ENCODE measurements at regions of chr11 and their contacts with region 1.

Region 1: GRCh38 chr11:22130462-22131053 is 62.3 kb upstream of the ANO5 start:
- DNase-seq: no peak
- ATAC-seq: no peak; the same call in 2 of the 3 replicates
- H3K4me3 ChIP-seq: no peak overlapping the region
- H3K27ac ChIP-seq: no peak overlapping the region
- H3K4me1 ChIP-seq: no peaks in the 10 kb centered on the region
- H3K27me3 ChIP-seq: no peaks in the 10 kb centered on the region
- CTCF ChIP-seq: peak; percentile 35; the same call in 1 of the 2 replicates
- EP300 ChIP-seq: no peak
- POLR2A ChIP-seq: no peak
- RAD21 ChIP-seq: no peak

Region 2: DNA sequence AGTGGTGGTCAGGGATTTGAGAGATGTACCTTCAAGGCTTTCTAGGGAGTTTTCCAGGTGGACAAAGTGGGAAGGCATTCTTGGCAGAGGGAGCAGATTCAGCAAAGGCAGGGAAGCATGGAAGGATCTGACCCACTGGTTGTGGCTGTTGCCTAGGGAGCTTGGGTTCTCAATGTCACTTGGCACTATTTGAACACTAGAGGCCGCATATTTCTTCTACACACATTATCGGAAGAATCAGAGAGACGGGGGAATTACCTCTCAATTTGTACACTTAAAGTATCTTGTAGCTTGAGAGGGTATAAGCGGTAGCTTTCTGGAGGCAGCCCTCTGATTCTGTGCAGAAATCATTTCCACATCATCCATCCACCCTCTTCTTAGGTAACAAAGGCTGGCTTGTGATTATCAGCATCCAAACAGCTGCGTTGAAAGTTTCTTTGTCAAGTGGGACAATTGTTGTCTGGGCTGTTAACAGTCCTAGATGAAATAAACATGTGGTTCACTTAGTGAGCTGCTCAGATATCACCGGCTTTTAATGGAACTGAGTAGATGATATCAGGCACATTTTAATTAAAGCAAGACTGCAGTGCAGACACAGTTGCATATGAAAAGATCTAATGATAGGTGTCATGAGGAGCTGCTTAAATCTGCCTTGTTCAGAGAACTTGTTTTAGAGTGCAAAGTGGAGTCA is 1458.6 kb before region 1 on chr11:
- CTCF ChIA-PET with region 1: no interaction called
- POLR2A ChIA-PET with region 1: no interaction called
- in situ Hi-C with region 1: loop called (anchors 25 kb)
- intact Hi-C with region 1: no loop called
- DNase-seq: peak; percentile 7
- ATAC-seq: peak; percentile 84
- H3K4me3 ChIP-seq: no peak overlapping the region
- H3K27ac ChIP-seq: no peak overlapping the region
- H3K4me1 ChIP-seq: no peaks in the 10 kb centered on the region
- H3K27me3 ChIP-seq: peaks cover 3 to 52% of the 10 kb centered on the region in 2 experiments
- CTCF ChIP-seq: peak; percentile 17; the same call in 1 of the 2 replicates
- EP300 ChIP-seq: no peak
- POLR2A ChIP-seq: no peak
- RAD21 ChIP-seq: no peak

Region 3: DNA sequence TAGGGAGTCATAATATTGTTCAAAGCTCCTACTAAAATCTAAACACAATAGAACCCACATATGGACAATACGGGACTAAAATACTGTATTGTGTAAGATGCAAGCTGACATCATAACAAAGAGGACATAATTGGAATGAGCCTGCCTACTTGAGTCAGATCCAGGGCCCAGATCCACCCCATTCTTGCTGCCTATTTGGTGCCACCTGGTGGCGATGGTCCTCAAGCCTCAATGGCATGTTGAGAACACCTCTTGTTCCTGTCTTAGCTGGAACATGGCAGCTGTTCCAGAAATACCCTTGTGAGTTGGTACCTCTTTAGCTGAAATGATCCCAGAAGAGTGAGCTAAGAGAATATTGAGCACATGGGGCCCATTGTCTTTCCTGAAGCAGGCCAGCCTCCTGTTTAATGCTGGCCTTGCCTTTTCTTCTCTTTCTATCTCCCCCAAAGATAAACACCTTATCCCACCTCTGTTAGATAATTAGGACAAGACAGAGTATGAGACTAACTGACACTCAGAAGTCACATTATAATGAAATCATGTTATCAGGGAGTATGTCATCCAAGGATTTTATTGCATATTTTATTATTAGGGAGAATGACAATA is 618.6 kb before region 1 on chr11:
- CTCF ChIA-PET with region 1: no interaction called
- POLR2A ChIA-PET with region 1: no interaction called
- in situ Hi-C with region 1: no loop called
- intact Hi-C with region 1: loop called (anchors 5 kb)
- DNase-seq: peak; percentile 48
- ATAC-seq: peak; percentile 88
- H3K4me3 ChIP-seq: no peak overlapping the region
- H3K27ac ChIP-seq: no peak overlapping the region
- H3K4me1 ChIP-seq: no peaks in the 10 kb centered on the region
- H3K27me3 ChIP-seq: no peaks in the 10 kb centered on the region
- CTCF ChIP-seq: peak; percentile 75
- EP300 ChIP-seq: no peak
- POLR2A ChIP-seq: no peak
- RAD21 ChIP-seq: no peak

Region 4: DNA sequence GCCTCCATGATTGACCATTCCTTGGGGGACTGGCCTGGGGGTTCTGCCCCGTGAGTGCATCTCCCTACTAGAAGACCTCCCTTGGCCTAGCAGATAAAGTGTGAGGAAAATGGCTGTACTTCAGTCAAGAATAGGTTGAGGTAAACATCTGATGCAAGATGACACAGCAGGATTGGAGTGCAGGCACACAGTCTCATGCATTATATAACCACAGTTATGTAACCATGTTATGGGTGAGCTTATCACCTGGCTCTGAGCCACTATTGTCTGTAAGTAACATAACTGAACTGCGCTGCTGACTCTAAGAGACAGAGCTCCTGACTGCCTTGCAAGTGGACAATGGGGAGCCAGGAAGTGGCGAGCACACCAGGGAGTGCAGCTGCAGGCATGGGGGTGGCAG is 316.4 kb before region 1 on chr11:
- CTCF ChIA-PET with region 1: no interaction called
- POLR2A ChIA-PET with region 1: no interaction called
- in situ Hi-C with region 1: no loop called
- intact Hi-C with region 1: loop called (anchors 1 kb)
- DNase-seq: peak; percentile 40
- ATAC-seq: no peak
- H3K4me3 ChIP-seq: no peak overlapping the region
- H3K27ac ChIP-seq: no peak overlapping the region
- H3K4me1 ChIP-seq: no peaks in the 10 kb centered on the region
- H3K27me3 ChIP-seq: no peaks in the 10 kb centered on the region
- CTCF ChIP-seq: no peak
- EP300 ChIP-seq: no peak
- POLR2A ChIP-seq: no peak
- RAD21 ChIP-seq: no peak

Region 5: GRCh38 chr11:21933095-21933494 is 197.5 kb before region 1 on chr11:
- CTCF ChIA-PET with region 1: no interaction called
- POLR2A ChIA-PET with region 1: no interaction called
- in situ Hi-C with region 1: no loop called
- intact Hi-C with region 1: loop called (anchors 1 kb)
- DNase-seq: no peak
- ATAC-seq: no peak
- H3K4me3 ChIP-seq: no peak overlapping the region
- H3K27ac ChIP-seq: no peak overlapping the region
- H3K4me1 ChIP-seq: no peaks in the 10 kb centered on the region
- H3K27me3 ChIP-seq: no peaks in the 10 kb centered on the region
- CTCF ChIP-seq: no peak
- EP300 ChIP-seq: no peak
- POLR2A ChIP-seq: no peak
- RAD21 ChIP-seq: no peak

Region 6: GRCh38 chr11:22392561-22392960 is 262.0 kb after region 1 on chr11:
- CTCF ChIA-PET with region 1: no interaction called
- POLR2A ChIA-PET with region 1: no interaction called
- in situ Hi-C with region 1: no loop called
- intact Hi-C with region 1: no loop called
- DNase-seq: no peak
- ATAC-seq: no peak
- H3K4me3 ChIP-seq: no peak overlapping the region
- H3K27ac ChIP-seq: no peak overlapping the region
- H3K4me1 ChIP-seq: no peaks in the 10 kb centered on the region
- H3K27me3 ChIP-seq: no peaks in the 10 kb centered on the region
- CTCF ChIP-seq: no peak
- EP300 ChIP-seq: no peak
- POLR2A ChIP-seq: no peak
- RAD21 ChIP-seq: no peak